ENCODE measurements at regions of chr19 and their contacts with region 1.

Region 1: DNA sequence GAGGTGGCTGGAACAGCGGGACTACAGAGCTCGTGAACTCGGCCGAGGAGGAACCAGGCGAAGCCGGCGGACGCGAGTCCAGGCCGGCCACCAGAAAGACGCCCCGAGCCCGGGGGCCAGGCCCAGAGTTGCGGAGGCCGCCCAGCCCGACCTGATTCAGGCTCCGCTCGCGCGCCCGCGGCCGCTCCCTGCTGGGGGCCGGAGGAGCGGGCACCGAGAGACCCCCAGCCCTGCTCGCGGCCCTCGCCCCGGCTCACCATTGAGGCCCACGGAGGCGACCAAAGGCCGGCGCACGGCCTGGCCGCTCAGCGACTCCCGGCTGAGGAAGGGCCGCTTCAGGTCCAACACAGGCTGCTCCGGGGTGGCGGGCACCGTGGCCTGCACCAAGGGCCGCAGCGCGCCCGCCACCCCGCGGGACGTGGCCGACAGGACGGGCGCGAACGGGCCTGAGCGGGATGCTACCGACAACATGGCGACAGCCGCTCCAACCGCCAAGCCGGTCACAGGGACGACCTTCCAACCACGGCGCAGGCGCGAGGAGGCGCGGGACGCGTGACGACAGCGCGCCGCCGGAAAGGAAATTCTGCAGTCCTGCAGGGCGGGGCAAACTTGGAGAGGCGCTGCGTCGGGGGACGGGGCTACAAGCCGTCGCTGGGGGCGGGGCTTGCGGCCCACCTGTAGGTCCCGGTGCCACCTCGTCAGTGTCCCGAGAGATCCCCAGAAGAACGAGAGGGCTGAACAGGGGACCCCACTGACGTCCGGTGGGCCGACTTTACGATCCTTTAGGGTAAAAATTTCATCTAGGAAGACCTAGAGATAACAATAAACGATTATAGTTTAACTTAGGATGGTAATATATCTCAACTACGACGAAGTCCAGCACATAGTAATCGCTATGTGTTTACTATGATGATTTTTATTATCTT is at the start of gene UQCRFS1:
- DNase-seq: peak; percentile 91 to 97 (median 94)
- ATAC-seq: peak; percentile 96
- H3K4me3 ChIP-seq: peak within 1 kb of the TSS; percentile 74
- H3K4me3 Mint-ChIP-seq: peak within 1 kb of the TSS; percentile 99
- H3K27ac ChIP-seq: peak within 1 kb of the TSS; percentile 67 to 78
- H3K27ac Mint-ChIP-seq: peak within 1 kb of the TSS; percentile 96
- H3K4me1 ChIP-seq: peaks cover 10% of the 10 kb centered on the region
- H3K4me1 Mint-ChIP-seq: peaks cover 54% of the 10 kb centered on the region
- H3K27me3 ChIP-seq: no peaks in the 10 kb centered on the region
- H3K27me3 Mint-ChIP-seq: peaks cover 14% of the 10 kb centered on the region
- CTCF ChIP-seq: no peak
- total RNA-seq, gene UQCRFS1: 30.5 TPM

Region 2: DNA sequence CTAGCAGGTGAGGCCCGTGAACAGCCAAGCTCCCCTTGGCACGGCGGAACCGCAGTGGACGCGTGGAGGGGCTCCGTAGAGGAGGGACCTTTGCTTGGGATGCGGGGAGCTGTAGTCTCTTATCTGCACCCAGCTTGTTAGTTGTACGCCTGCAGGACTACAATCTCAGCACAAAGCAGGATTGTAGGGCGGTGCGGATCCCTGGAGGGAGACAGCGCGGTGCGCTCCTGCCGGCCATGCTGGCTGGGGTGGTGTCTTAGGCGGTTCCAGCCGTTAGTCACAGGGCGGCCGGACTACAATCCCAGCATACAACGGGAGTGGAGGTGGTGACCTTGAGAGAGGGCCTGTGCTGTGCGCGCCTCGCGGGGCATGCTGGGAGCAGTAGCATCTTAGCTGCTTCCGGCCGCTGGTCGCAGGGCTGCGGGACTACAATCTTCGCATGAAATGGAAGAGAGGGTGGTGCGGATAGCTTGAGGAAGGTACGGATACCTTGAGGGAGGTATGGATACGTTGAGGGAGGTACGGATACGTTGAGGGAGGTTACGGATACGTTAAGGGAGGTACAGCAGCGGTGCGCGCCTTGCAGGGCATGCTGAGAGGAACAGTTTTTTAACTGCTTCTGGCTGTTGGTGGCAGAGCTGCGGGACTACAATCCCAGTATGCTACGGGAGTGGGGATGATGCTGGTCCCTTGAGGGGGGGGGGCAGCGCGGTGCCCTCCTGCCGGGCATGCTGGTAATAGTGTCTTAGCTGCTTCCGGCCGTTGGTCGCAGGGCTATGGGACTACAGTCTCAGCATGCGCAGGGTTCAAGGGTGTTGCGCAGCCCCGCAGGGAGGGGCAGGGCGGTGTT is 1419.0 kb before region 1 on chr19:
- CTCF ChIA-PET with region 1: interaction called, 3 read pairs
- POLR2A ChIA-PET with region 1: interaction called, 4 read pairs
- intact Hi-C with region 1: loop called (anchors 5 kb)
- DNase-seq: peak; percentile 82 to 95 (median 88)
- ATAC-seq: peak; percentile 92
- H3K4me3 ChIP-seq: peak overlapping the region; percentile 93
- H3K4me3 Mint-ChIP-seq: peak overlapping the region; percentile 98
- H3K27ac ChIP-seq: peak overlapping the region; percentile 78 to 84
- H3K27ac Mint-ChIP-seq: peak overlapping the region; percentile 86
- H3K4me1 ChIP-seq: peaks cover 26% of the 10 kb centered on the region
- H3K4me1 Mint-ChIP-seq: peaks cover 31% of the 10 kb centered on the region
- H3K27me3 ChIP-seq: no peaks in the 10 kb centered on the region
- H3K27me3 Mint-ChIP-seq: no peaks in the 10 kb centered on the region
- CTCF ChIP-seq: no peak

Region 3: DNA sequence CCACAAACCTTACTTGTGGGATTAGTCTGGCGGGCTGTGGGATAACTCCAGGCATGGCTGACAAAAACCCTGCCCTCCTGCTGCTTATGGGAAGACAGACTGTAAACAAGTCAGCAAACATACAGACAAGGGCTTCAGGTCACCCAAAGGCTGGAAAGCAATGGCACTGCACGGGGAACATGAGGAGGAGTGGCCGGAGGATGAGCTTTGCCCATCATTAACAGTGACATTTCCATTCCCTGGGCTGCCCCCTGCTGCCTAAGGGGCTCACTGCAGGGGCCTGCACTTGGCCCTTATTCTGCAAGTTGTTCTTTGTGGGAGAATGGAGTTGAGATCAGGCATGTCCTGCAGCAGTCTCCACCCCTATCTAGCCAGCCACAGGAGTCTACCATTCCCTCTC is 91.2 kb before region 1 on chr19:
- CTCF ChIA-PET with region 1: no interaction called
- POLR2A ChIA-PET with region 1: no interaction called
- intact Hi-C with region 1: no loop called
- DNase-seq: no peak
- ATAC-seq: no peak
- H3K4me3 ChIP-seq: no peak overlapping the region
- H3K4me3 Mint-ChIP-seq: no peak overlapping the region
- H3K27ac ChIP-seq: no peak overlapping the region
- H3K27ac Mint-ChIP-seq: no peak overlapping the region
- H3K4me1 ChIP-seq: no peaks in the 10 kb centered on the region
- H3K4me1 Mint-ChIP-seq: no peaks in the 10 kb centered on the region
- H3K27me3 ChIP-seq: peaks cover 0 to 3% of the 10 kb centered on the region in 2 experiments
- H3K27me3 Mint-ChIP-seq: peaks cover 10% of the 10 kb centered on the region
- CTCF ChIP-seq: no peak

Region 4: GRCh38 chr19:29811125-29812079 is 598.5 kb after region 1 on chr19 and contains the start of gene CCNE1:
- CTCF ChIA-PET with region 1: no interaction called
- POLR2A ChIA-PET with region 1: no interaction called
- intact Hi-C with region 1: loop called in 1 of 2 experiments (anchors 10 kb)
- DNase-seq: peak; percentile 88 to 100 (median 94)
- ATAC-seq: peak; percentile 90
- H3K4me3 ChIP-seq: peak within 1 kb of the TSS; percentile 58
- H3K4me3 Mint-ChIP-seq: peak within 1 kb of the TSS; percentile 96
- H3K27ac ChIP-seq: peak within 1 kb of the TSS; percentile 50 to 55
- H3K27ac Mint-ChIP-seq: peak within 1 kb of the TSS; percentile 82
- H3K4me1 ChIP-seq: peaks cover 14% of the 10 kb centered on the region
- H3K4me1 Mint-ChIP-seq: peaks cover 11% of the 10 kb centered on the region
- H3K27me3 ChIP-seq: no peaks in the 10 kb centered on the region
- H3K27me3 Mint-ChIP-seq: no peaks in the 10 kb centered on the region
- CTCF ChIP-seq: no peak
- total RNA-seq, gene CCNE1: 4.9 to 5.6 TPM

Measured in CD4-positive, alpha-beta T cell (primary cell).